Transverse colon (tissue), 4 donors: ENCODE measurements at regions of chr3 and their contacts with region 1.

Region 1: DNA sequence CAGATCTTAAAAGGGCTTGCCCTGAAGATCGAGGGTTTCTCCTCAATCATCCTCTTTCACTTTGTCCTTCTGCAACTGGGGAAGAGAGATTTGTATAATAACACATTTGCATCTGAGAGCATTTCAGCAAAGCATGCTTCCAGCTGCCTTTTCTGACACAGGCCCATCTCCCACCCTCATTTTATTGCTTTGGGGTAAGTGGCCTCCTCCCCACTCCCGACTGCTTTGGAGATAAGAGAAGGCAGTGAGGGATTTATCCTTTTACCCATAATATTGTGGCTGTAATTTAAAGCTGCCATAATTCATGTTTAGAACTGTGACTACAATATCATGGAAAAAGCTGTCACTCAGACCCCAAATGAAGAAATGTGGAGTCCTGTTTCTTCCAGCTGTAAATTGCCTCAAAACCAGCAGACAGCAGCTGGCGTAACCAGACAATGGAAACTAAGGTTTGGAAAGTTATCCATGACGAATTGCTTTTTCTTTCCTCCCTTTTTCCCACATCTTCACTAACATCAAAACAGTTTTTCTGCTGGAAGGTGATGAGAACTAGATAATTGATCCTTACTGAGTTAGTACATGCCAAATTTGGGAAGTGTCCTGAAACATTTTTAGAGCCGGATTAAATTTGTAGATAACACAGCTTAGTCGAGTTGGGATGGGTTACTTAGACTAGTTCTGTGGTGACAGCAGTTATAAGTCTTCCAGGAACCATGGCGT is 104.2 kb upstream of the PFN2 start:
- DNase-seq: no peak
- H3K4me3 ChIP-seq: no peak overlapping the region
- H3K27ac ChIP-seq: no peak overlapping the region
- H3K4me1 ChIP-seq: peaks cover 0 to 14% (median 2%) of the 10 kb centered on the region in 4 donors
- H3K27me3 ChIP-seq: no peaks in the 10 kb centered on the region
- CTCF ChIP-seq: no peak
- EP300 ChIP-seq: no peak
- POLR2A ChIP-seq: no peak

Region 2: DNA sequence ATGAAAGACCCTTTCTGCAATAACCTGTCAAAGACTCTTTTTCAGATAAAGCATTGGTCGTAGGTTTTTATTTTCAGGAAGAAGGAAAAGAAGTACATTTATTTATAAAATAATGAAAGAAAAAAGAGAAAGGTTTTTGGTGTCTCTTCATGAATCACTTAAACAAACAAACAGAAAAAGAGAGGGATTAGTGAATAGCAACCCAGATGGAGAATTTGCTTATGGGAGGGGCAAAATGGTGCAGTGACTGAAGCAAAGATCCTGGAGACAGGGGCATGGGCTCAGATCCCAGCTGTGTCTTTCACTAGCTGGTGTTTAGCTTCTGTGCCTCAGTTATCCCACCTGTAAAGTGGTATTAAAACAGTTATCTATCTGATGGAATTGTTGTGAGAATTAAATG is 25.5 kb before region 1 on chr3:
- in situ Hi-C with region 1: no loop called
- intact Hi-C with region 1: loop called (anchors 1 kb)
- DNase-seq: no peak
- H3K4me3 ChIP-seq: no peak overlapping the region
- H3K27ac ChIP-seq: no peak overlapping the region
- H3K4me1 ChIP-seq: no peaks in the 10 kb centered on the region
- H3K27me3 ChIP-seq: no peaks in the 10 kb centered on the region
- CTCF ChIP-seq: no peak
- EP300 ChIP-seq: no peak
- POLR2A ChIP-seq: no peak

Region 3: GRCh38 chr3:151067158-151067557 is 992.3 kb after region 1 on chr3:
- in situ Hi-C with region 1: no loop called
- intact Hi-C with region 1: no loop called
- DNase-seq: no peak
- H3K4me3 ChIP-seq: no peak overlapping the region
- H3K27ac ChIP-seq: no peak overlapping the region
- H3K4me1 ChIP-seq: no peaks in the 10 kb centered on the region
- H3K27me3 ChIP-seq: no peaks in the 10 kb centered on the region
- CTCF ChIP-seq: no peak
- EP300 ChIP-seq: no peak
- POLR2A ChIP-seq: no peak